ENCODE measurements at regions of chr1 and their contacts with region 1.

Region 1: GRCh38 chr1:25796811-25797458 is 3.1 kb upstream of the SELENON start:
- DNase-seq: peak; percentile 79 to 90 (median 89)
- H3K4me3 ChIP-seq: no peak overlapping the region
- H3K27ac ChIP-seq: no peak overlapping the region
- H3K4me1 ChIP-seq: peaks cover 5% of the 10 kb centered on the region
- H3K27me3 ChIP-seq: no peaks in the 10 kb centered on the region
- CTCF ChIP-seq: peak; percentile 69 to 74 (median 69)
- EP300 ChIP-seq: no peak
- POLR2A ChIP-seq: no peak

Region 2: DNA sequence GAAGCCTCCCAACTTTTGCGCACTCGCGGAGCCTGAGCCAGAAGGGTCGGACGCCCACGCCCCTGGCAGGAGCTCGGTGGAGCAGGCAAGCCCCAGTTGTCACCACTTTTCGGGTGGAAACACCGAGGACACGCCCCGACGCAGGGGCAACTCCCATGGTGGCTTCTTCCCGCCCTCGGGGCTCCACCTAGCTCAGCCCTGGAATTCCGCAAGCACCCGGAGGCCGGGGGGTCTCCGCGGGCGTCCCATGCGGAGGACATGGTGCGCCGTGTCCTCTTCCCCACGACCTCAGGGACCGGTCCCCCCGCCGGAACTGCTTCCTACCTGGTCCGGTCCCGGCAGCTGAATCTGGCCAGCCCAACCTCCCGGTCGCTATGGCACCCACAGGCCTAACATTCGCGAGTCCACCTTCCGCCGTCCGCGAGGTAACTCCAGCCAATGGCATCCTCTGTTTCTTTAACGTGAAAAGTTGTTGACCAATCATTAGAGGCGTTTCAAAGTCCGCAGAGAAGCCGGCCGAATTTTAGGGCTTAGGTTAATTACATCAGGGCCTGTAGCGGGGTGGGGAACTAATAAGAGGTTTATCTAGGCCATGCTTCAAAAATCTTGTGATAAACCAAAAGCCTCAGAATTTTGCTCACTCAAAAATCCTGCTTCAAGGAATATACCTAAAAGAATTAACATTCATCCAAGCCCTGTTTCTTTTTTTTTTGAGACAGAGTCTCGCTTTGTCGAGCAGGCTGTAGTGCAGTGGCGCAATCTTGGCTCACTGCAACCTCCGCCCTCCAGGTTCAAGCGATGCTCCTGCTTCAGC is 1383.4 kb before region 1 on chr1 and contains the start of gene STPG1:
- intact Hi-C with region 1: loop called in 1 of 4 experiments (anchors 5 kb)
- DNase-seq: peak; percentile 76 to 85 (median 81)
- H3K4me3 ChIP-seq: peak within 1 kb of the TSS; percentile 43
- H3K27ac ChIP-seq: no peak within 1 kb of the TSS
- H3K4me1 ChIP-seq: peaks cover 2% of the 10 kb centered on the region
- H3K27me3 ChIP-seq: no peaks in the 10 kb centered on the region
- CTCF ChIP-seq: no peak
- EP300 ChIP-seq: no peak
- POLR2A ChIP-seq: no peak
- total RNA-seq, gene STPG1: 5.4 to 12.6 (median 7.3) TPM

Region 3: DNA sequence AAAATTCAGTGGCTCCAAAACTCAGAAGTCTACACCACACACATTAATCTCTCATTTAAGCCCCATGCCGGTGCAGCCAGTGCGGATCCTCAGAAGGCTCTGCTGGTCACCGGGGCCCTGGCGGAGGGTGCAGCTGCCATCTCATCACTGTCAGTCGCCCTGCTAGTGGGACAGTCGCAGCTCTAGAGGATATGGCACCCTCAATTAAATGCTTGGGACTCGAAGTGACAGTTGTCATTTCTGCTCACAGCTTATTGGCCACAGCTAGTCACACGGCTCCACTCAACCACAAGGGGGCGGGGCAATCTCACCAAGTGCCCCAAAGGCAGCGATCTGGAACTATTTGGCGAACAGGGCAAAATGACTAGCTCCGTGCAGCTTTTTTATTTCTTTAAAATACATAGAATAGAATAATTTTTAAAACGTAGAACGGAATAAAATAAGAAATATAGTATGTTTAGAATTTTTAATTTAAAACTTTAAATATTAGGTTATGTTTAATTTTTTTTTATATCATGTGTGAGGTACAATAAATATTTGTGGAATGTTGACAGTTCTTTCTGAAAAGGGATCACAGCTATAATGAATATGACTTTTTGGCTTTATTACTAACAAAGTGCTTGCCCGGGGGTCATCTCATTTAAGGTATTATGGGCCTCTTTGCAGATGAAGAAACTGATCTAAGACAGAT is 188.3 kb before region 1 on chr1:
- intact Hi-C with region 1: loop called (anchors 1 to 5 kb)
- DNase-seq: peak; percentile 77 to 90 (median 88)
- H3K4me3 ChIP-seq: no peak overlapping the region
- H3K27ac ChIP-seq: no peak overlapping the region
- H3K4me1 ChIP-seq: no peaks in the 10 kb centered on the region
- H3K27me3 ChIP-seq: no peaks in the 10 kb centered on the region
- CTCF ChIP-seq: peak; percentile 74 to 96 (median 88)
- EP300 ChIP-seq: no peak
- POLR2A ChIP-seq: no peak

Region 4: GRCh38 chr1:25695090-25695770 is 101.7 kb before region 1 on chr1:
- intact Hi-C with region 1: loop called in 1 of 4 experiments (anchors 10 kb)
- DNase-seq: peak; percentile 73 to 88 (median 80)
- H3K4me3 ChIP-seq: no peak overlapping the region
- H3K27ac ChIP-seq: peak overlapping the region; percentile 60 to 72
- H3K4me1 ChIP-seq: peaks cover 37% of the 10 kb centered on the region
- H3K27me3 ChIP-seq: no peaks in the 10 kb centered on the region
- CTCF ChIP-seq: peak in 1 of 3 donors; percentile 44
- EP300 ChIP-seq: peak; percentile 92
- POLR2A ChIP-seq: no peak

Region 5: GRCh38 chr1:25743826-25744581 is 52.9 kb before region 1 on chr1:
- intact Hi-C with region 1: loop called in 1 of 4 experiments (anchors 10 kb)
- DNase-seq: peak; percentile 78 to 83 (median 81)
- H3K4me3 ChIP-seq: no peak overlapping the region
- H3K27ac ChIP-seq: peak overlapping the region; percentile 26 to 83
- H3K4me1 ChIP-seq: peaks cover 16% of the 10 kb centered on the region
- H3K27me3 ChIP-seq: no peaks in the 10 kb centered on the region
- CTCF ChIP-seq: peak; percentile 21 to 65 (median 61)
- EP300 ChIP-seq: no peak
- POLR2A ChIP-seq: peak; percentile 13